Cardiac septum (tissue), 1 donor: ENCODE measurements at regions of chr11 and their contacts with region 1.

Region 1: GRCh38 chr11:68257475-68258362 is 14.1 kb downstream of the C11orf24 start:
- DNase-seq: peak; percentile 96

Region 2: GRCh38 chr11:68383976-68384501 is 126.3 kb after region 1 on chr11:
- intact Hi-C with region 1: loop called (anchors 5 kb)
- DNase-seq: peak; percentile 87